ENCODE measurements at regions of chr6 and their contacts with region 1.

Region 1: DNA sequence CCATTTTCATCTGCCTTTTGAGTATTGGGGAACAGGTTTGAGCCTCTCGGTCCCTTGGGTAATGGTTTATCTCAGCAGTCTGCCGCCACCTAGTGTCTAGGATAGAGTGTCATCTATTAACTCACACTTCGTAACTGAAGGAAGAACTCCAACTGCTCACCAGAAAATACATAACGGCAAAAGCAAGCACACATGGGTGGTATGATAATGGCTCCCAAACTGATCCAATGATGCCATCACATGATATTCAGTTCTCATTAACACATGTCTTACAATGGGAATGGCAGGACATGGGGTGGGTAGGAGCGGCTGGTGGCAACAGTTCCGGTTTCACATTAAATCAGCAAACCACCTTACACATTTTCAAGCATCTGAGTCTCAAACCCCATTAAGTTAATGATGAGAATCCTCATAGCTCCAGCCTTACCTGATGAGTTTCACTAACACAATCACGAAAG is 110.7 kb upstream of the PHACTR1 start:
- DNase-seq: no peak
- ATAC-seq: peak in 2 of 4 donors; percentile 39 to 71
- H3K4me3 ChIP-seq: no peak overlapping the region
- H3K27ac ChIP-seq: no peak overlapping the region
- H3K4me1 ChIP-seq: no peaks in the 10 kb centered on the region
- H3K27me3 ChIP-seq: no peaks in the 10 kb centered on the region
- CTCF ChIP-seq: peak; percentile 63

Region 2: GRCh38 chr6:11585426-11586016 is 1020.4 kb before region 1 on chr6:
- intact Hi-C with region 1: loop called in 1 of 2 experiments (anchors 2 kb)
- DNase-seq: no peak
- ATAC-seq: peak in 1 of 4 donors; percentile 57
- H3K4me3 ChIP-seq: no peak overlapping the region
- H3K27ac ChIP-seq: no peak overlapping the region
- H3K4me1 ChIP-seq: peaks cover 5% of the 10 kb centered on the region
- H3K27me3 ChIP-seq: peaks cover 0 to 8% (median 0%) of the 10 kb centered on the region in 3 donors
- CTCF ChIP-seq: peak; percentile 57

Region 3: GRCh38 chr6:11653028-11653583 is 952.8 kb before region 1 on chr6:
- intact Hi-C with region 1: loop called (anchors 2 to 5 kb)
- DNase-seq: no peak
- ATAC-seq: peak in 3 of 4 donors; percentile 24 to 41 (median 40)
- H3K4me3 ChIP-seq: no peak overlapping the region
- H3K27ac ChIP-seq: no peak overlapping the region
- H3K4me1 ChIP-seq: peaks cover 14% of the 10 kb centered on the region
- H3K27me3 ChIP-seq: no peaks in the 10 kb centered on the region
- CTCF ChIP-seq: no peak

Region 4: DNA sequence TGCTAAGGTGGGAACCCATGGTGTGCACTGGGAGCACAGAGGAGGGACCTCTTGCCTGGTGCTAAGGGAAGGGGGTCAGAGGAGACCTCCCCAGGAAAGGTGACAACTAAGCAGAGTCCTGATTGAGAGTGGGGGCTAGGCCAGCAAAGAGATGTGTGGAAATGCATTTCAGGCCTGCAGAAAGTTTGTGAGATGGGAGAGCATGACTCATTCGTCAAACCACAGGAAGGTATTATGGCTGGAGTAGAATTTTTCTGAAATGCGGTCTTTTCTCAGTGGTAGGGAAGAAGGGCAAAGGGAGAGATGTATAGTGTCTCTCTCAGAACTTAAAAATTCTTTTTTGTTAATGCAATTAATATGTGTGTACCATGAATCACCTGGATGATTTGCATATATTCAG is 339.3 kb before region 1 on chr6:
- intact Hi-C with region 1: no loop called
- DNase-seq: no peak
- ATAC-seq: no peak
- H3K4me3 ChIP-seq: no peak overlapping the region
- H3K27ac ChIP-seq: no peak overlapping the region
- H3K4me1 ChIP-seq: no peaks in the 10 kb centered on the region
- H3K27me3 ChIP-seq: no peaks in the 10 kb centered on the region
- CTCF ChIP-seq: no peak

Region 5: GRCh38 chr6:12289933-12290820 is 315.7 kb before region 1 on chr6 and contains the start of gene EDN1:
- intact Hi-C with region 1: loop called in 1 of 2 experiments (anchors 10 kb)
- DNase-seq: peak; percentile 69 to 72
- ATAC-seq: peak; percentile 67 to 94 (median 86)
- H3K4me3 ChIP-seq: peak within 1 kb of the TSS; percentile 62
- H3K27ac ChIP-seq: peak within 1 kb of the TSS; percentile 41
- H3K4me1 ChIP-seq: peaks cover 10% of the 10 kb centered on the region
- H3K27me3 ChIP-seq: peaks cover 0 to 26% (median 9%) of the 10 kb centered on the region in 3 donors
- CTCF ChIP-seq: peak; percentile 34
- total RNA-seq, gene EDN1: 0.90 to 3.7 (median 2.6) TPM

Region 6: GRCh38 chr6:12548526-12548925 is 57.4 kb before region 1 on chr6:
- intact Hi-C with region 1: no loop called
- DNase-seq: no peak
- ATAC-seq: no peak
- H3K4me3 ChIP-seq: no peak overlapping the region
- H3K27ac ChIP-seq: no peak overlapping the region
- H3K4me1 ChIP-seq: no peaks in the 10 kb centered on the region
- H3K27me3 ChIP-seq: no peaks in the 10 kb centered on the region
- CTCF ChIP-seq: no peak